ENCODE measurements at regions of chr13 and their contacts with region 1.

Region 1: DNA sequence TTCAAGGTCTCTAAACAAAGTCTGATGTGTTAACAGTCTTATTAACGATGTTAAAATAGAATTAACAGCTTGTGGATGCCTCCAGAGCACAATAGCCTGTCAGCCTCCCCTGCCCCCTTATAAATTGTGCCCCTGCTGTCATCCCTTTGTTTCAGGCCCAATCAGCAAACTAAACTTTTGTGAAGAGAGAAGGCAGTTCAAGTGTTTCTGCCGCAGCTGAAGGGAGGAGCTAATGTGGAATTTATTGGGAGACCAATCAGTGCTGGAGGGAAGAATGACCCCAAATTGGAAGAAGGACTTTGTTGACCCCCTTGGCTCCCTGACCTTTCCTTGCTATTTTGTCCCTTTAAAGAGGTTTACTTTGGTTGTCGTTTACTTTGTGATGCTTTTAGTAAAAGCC is 160.5 kb downstream of the TM9SF2 start:
- DNase-seq: no peak
- ATAC-seq: no peak
- H3K4me3 ChIP-seq: no peak overlapping the region
- H3K4me3 Mint-ChIP-seq: no peak overlapping the region
- H3K27ac ChIP-seq: no peak overlapping the region
- H3K27ac Mint-ChIP-seq: peak overlapping the region in 7 of 9 donors; percentile 12 to 95 (median 62)
- H3K4me1 ChIP-seq: peaks cover 30 to 31% of the 10 kb centered on the region in 2 donors
- H3K4me1 Mint-ChIP-seq: peaks cover 9 to 48% (median 41%) of the 10 kb centered on the region in 7 donors
- H3K27me3 ChIP-seq: no peaks in the 10 kb centered on the region
- H3K27me3 Mint-ChIP-seq: peaks cover 0 to 45% (median 0%) of the 10 kb centered on the region in 5 donors

Region 2: DNA sequence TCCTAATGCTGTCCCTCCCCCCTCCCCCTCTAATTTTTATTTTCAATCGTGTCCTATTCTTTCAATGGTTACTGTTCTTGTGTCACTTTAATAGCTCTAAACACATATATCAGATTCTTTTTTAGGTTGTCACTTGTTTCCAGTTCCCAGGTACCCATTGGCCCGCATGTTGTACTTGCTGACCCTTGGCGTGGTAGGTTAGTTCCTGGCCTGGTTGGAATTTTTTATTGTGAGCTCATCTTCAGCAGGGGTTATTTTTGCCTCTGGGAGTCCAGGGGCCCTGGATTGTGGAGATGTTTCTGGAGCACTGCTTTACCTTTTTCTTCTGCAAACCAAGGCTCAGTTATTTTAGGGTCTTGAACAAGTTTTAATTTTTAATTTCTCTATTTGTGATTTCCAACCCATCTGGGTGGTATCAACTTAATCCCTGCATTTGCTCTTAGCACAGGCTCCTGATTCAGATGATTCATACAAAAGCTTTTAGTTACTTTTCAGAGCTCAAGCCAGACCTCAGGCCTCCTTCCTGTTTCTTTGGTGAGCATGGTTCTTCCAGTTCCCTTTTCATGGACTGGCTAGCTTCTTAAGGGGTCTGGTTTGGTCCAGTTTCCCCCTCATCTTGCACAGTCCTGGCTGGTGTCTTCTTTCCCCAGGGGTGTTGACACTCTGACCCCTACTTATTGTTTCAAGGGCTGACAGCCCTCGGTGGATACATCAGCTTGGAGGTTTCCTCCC is 60.0 kb after region 1 on chr13:
- CTCF ChIA-PET with region 1: no interaction called
- POLR2A ChIA-PET with region 1: no interaction called
- intact Hi-C with region 1: loop called in 1 of 2 experiments (anchors 10 kb)
- DNase-seq: no peak
- ATAC-seq: no peak
- H3K4me3 ChIP-seq: no peak overlapping the region
- H3K4me3 Mint-ChIP-seq: no peak overlapping the region
- H3K27ac ChIP-seq: no peak overlapping the region
- H3K27ac Mint-ChIP-seq: no peak overlapping the region
- H3K4me1 ChIP-seq: no peaks in the 10 kb centered on the region
- H3K4me1 Mint-ChIP-seq: peaks cover 0 to 13% (median 0%) of the 10 kb centered on the region in 7 donors
- H3K27me3 ChIP-seq: no peaks in the 10 kb centered on the region
- H3K27me3 Mint-ChIP-seq: no peaks in the 10 kb centered on the region

Measured in naive thymus-derived CD4-positive, alpha-beta T cell (primary cell).